ENCODE measurements at regions of chr1 and their contacts with region 1.

Region 1: GRCh38 chr1:234772345-234773147 is 162.6 kb upstream of the IRF2BP2 start:
- DNase-seq: peak; percentile 42 to 88 (median 64)
- ATAC-seq: peak; percentile 88
- H3K4me3 ChIP-seq: peak overlapping the region; percentile 7
- H3K4me3 Mint-ChIP-seq: peak overlapping the region; percentile 55 to 83 (median 74)
- H3K27ac ChIP-seq: peak overlapping the region; percentile 64
- H3K27ac Mint-ChIP-seq: peak overlapping the region; percentile 79 to 95 (median 90)
- H3K4me1 ChIP-seq: peaks cover 14 to 53% of the 10 kb centered on the region in 2 donors
- H3K4me1 Mint-ChIP-seq: peaks cover 39 to 69% (median 54%) of the 10 kb centered on the region in 7 donors
- H3K27me3 ChIP-seq: no peaks in the 10 kb centered on the region
- H3K27me3 Mint-ChIP-seq: no peaks in the 10 kb centered on the region

Region 2: GRCh38 chr1:234599617-234600417 is 172.7 kb before region 1 on chr1:
- CTCF ChIA-PET with region 1: no interaction called
- POLR2A ChIA-PET with region 1: interaction called, 3 read pairs
- intact Hi-C with region 1: loop called in 1 of 2 experiments (anchors 1 kb)
- DNase-seq: peak; percentile 52 to 88 (median 62)
- ATAC-seq: peak; percentile 74
- H3K4me3 ChIP-seq: peak overlapping the region; percentile 61
- H3K4me3 Mint-ChIP-seq: peak overlapping the region; percentile 75 to 97 (median 89)
- H3K27ac ChIP-seq: peak overlapping the region; percentile 96
- H3K27ac Mint-ChIP-seq: peak overlapping the region; percentile 87 to 99 (median 95)
- H3K4me1 ChIP-seq: peaks cover 51 to 54% of the 10 kb centered on the region in 2 donors
- H3K4me1 Mint-ChIP-seq: peaks cover 24 to 68% (median 56%) of the 10 kb centered on the region in 7 donors
- H3K27me3 ChIP-seq: no peaks in the 10 kb centered on the region
- H3K27me3 Mint-ChIP-seq: no peaks in the 10 kb centered on the region

Region 3: GRCh38 chr1:234730770-234731568 is 41.6 kb before region 1 on chr1:
- CTCF ChIA-PET with region 1: no interaction called
- POLR2A ChIA-PET with region 1: interaction called, 26 read pairs
- intact Hi-C with region 1: loop called (anchors 1 kb)
- DNase-seq: peak in 8 of 9 donors; percentile 47 to 82 (median 68)
- ATAC-seq: peak; percentile 76
- H3K4me3 ChIP-seq: no peak overlapping the region
- H3K4me3 Mint-ChIP-seq: peak overlapping the region; percentile 45 to 77 (median 64)
- H3K27ac ChIP-seq: peak overlapping the region; percentile 43
- H3K27ac Mint-ChIP-seq: peak overlapping the region; percentile 57 to 96 (median 87)
- H3K4me1 ChIP-seq: peaks cover 35 to 42% of the 10 kb centered on the region in 2 donors
- H3K4me1 Mint-ChIP-seq: peaks cover 38 to 82% (median 62%) of the 10 kb centered on the region in 7 donors
- H3K27me3 ChIP-seq: no peaks in the 10 kb centered on the region
- H3K27me3 Mint-ChIP-seq: no peaks in the 10 kb centered on the region

Region 4: GRCh38 chr1:234758851-234759250 is 13.7 kb before region 1 on chr1:
- CTCF ChIA-PET with region 1: no interaction called
- POLR2A ChIA-PET with region 1: interaction called, 11 read pairs
- intact Hi-C with region 1: loop called in 1 of 2 experiments (anchors 1 kb)
- DNase-seq: peak in 7 of 9 donors; percentile 59 to 85 (median 68)
- ATAC-seq: peak; percentile 87
- H3K4me3 ChIP-seq: no peak overlapping the region
- H3K4me3 Mint-ChIP-seq: peak overlapping the region in 9 of 10 donors; percentile 29 to 66 (median 49)
- H3K27ac ChIP-seq: no peak overlapping the region
- H3K27ac Mint-ChIP-seq: peak overlapping the region; percentile 57 to 97 (median 85)
- H3K4me1 ChIP-seq: peaks cover 9 to 19% of the 10 kb centered on the region in 2 donors
- H3K4me1 Mint-ChIP-seq: peaks cover 13 to 48% (median 34%) of the 10 kb centered on the region in 7 donors
- H3K27me3 ChIP-seq: no peaks in the 10 kb centered on the region
- H3K27me3 Mint-ChIP-seq: peaks cover 0 to 10% (median 0%) of the 10 kb centered on the region in 5 donors

Region 5: DNA sequence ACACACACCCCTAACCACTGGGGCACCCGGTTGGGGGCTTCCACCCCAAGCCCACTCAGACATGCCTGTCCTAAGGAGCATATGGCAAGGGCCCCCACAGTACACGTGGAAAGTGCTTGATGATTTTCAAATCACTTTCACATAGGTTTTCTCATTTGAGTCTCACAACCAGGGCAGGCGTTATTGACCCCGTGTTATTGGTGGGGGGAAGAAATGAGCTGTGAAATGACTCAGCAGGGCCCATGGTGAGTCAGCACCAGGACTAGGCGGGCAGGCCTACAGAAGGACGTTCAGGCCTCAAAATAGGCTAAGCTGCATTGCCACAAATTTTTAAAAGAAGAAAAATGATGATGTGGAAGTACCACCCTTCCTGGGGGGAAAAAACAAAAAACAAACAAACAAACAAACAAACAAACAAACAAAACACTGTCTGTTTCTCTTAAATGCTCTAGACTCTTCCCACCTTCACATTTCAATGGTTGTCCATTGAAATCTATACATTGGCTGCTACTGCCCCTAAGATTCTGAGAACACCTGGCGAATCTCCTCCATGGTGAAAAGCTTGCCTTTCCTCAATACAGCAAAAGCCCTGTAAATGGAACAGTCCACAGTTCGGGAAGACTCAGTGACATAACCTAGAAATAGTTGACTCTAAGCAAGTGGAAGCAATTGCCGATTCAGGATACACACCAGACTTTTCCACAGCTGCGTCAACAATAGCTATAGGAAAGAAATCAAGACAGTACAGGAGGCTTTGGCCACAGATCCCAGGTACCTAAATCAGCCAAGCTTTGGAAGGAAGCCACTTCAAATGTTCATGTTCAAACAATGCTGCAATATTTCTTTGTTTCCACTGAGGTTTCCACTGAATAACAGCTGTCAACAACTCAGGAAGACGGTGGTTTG is 121.4 kb after region 1 on chr1:
- CTCF ChIA-PET with region 1: no interaction called
- POLR2A ChIA-PET with region 1: no interaction called
- intact Hi-C with region 1: no loop called
- DNase-seq: peak in 2 of 9 donors; percentile 12 to 34
- ATAC-seq: no peak
- H3K4me3 ChIP-seq: no peak overlapping the region
- H3K4me3 Mint-ChIP-seq: peak overlapping the region in 2 of 10 donors; percentile 33 to 42
- H3K27ac ChIP-seq: no peak overlapping the region
- H3K27ac Mint-ChIP-seq: peak overlapping the region in 5 of 9 donors; percentile 6 to 78 (median 32)
- H3K4me1 ChIP-seq: no peaks in the 10 kb centered on the region
- H3K4me1 Mint-ChIP-seq: peaks cover 11 to 60% (median 22%) of the 10 kb centered on the region in 7 donors
- H3K27me3 ChIP-seq: no peaks in the 10 kb centered on the region
- H3K27me3 Mint-ChIP-seq: no peaks in the 10 kb centered on the region

Region 6: GRCh38 chr1:234963180-234963903 is 190.8 kb after region 1 on chr1:
- CTCF ChIA-PET with region 1: interaction called, 3 read pairs
- POLR2A ChIA-PET with region 1: no interaction called
- intact Hi-C with region 1: loop called (anchors 1 to 5 kb)
- DNase-seq: peak; percentile 55 to 90 (median 75)
- ATAC-seq: peak; percentile 93
- H3K4me3 ChIP-seq: peak overlapping the region; percentile 41
- H3K4me3 Mint-ChIP-seq: peak overlapping the region; percentile 68 to 87 (median 80)
- H3K27ac ChIP-seq: peak overlapping the region; percentile 79
- H3K27ac Mint-ChIP-seq: peak overlapping the region; percentile 88 to 97 (median 93)
- H3K4me1 ChIP-seq: peaks cover 36 to 55% of the 10 kb centered on the region in 2 donors
- H3K4me1 Mint-ChIP-seq: peaks cover 55 to 75% (median 69%) of the 10 kb centered on the region in 7 donors
- H3K27me3 ChIP-seq: no peaks in the 10 kb centered on the region
- H3K27me3 Mint-ChIP-seq: no peaks in the 10 kb centered on the region

Region 7: DNA sequence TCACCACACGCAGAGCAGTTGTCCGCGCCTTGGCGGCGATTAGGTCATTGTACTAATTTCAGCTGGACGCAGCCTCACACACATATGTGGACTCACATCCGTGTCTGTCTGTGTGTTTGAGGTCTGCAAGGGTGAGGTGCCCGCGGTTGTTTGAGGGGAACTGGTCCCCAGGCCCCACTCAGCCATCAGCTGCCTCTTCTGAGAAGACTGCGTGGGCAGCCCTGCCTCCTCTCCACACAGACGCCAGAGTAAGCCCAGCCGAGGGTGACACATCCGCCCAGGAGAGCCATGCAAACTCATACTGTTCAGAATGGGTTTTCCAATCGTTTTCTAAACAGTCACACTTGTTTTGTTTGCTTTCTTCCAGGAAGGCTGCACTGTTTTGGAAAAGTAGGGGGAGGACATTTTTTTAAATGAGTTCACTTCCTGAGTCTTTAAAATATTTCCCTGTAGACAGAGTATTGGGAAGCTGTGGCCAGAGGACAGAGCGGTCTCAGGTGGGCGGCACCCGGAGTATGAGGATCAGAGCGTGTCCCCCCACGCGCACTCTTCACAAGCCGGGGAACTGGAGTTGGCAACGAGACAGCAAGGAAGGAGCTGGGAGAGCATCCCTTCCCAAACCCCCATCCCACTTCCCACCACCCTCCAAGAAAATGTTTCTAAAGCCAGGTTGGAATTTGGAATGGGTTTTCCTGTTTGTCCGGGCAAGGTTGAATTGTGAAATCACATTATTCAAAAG is 302.8 kb after region 1 on chr1:
- CTCF ChIA-PET with region 1: no interaction called
- POLR2A ChIA-PET with region 1: no interaction called
- intact Hi-C with region 1: loop called (anchors 1 to 5 kb)
- DNase-seq: peak in 1 of 9 donors; percentile 76
- ATAC-seq: peak; percentile 44
- H3K4me3 ChIP-seq: peak overlapping the region; percentile 31
- H3K4me3 Mint-ChIP-seq: peak overlapping the region in 1 of 10 donors; percentile 65
- H3K27ac ChIP-seq: no peak overlapping the region
- H3K27ac Mint-ChIP-seq: peak overlapping the region in 1 of 9 donors; percentile 90
- H3K4me1 ChIP-seq: peaks cover 0 to 10% of the 10 kb centered on the region in 2 donors
- H3K4me1 Mint-ChIP-seq: peaks cover 0 to 38% (median 6%) of the 10 kb centered on the region in 7 donors
- H3K27me3 ChIP-seq: no peaks in the 10 kb centered on the region
- H3K27me3 Mint-ChIP-seq: no peaks in the 10 kb centered on the region